ENCODE measurements at regions of chr15 and their contacts with region 1.

Region 1: GRCh38 chr15:88620995-88621772 is at the start of gene AEN:
- DNase-seq: peak; percentile 95
- H3K4me3 Mint-ChIP-seq: peak within 1 kb of the TSS; percentile 95
- H3K27ac Mint-ChIP-seq: peak within 1 kb of the TSS; percentile 97
- H3K4me1 Mint-ChIP-seq: peaks cover 38% of the 10 kb centered on the region
- H3K27me3 Mint-ChIP-seq: peaks cover 3% of the 10 kb centered on the region
- total RNA-seq, gene AEN: 52.9 and 54.3 TPM in 2 replicates

Region 2: GRCh38 chr15:88638626-88639372 is 17.6 kb after region 1 on chr15 and contains the start of gene ISG20:
- intact Hi-C with region 1: loop called (anchors 1 kb)
- DNase-seq: peak; percentile 96
- H3K4me3 Mint-ChIP-seq: peak within 1 kb of the TSS; percentile 85
- H3K27ac Mint-ChIP-seq: peak within 1 kb of the TSS; percentile 94
- H3K4me1 Mint-ChIP-seq: peaks cover 60% of the 10 kb centered on the region
- H3K27me3 Mint-ChIP-seq: no peaks in the 10 kb centered on the region
- total RNA-seq, gene ISG20: 36.3 and 38.0 TPM in 2 replicates

Region 3: GRCh38 chr15:88664151-88664778 is 43.1 kb after region 1 on chr15:
- intact Hi-C with region 1: loop called (anchors 1 kb)
- DNase-seq: no peak
- H3K4me3 Mint-ChIP-seq: no peak overlapping the region
- H3K27ac Mint-ChIP-seq: no peak overlapping the region
- H3K4me1 Mint-ChIP-seq: peaks cover 6% of the 10 kb centered on the region
- H3K27me3 Mint-ChIP-seq: peaks cover 16% of the 10 kb centered on the region

Region 4: GRCh38 chr15:89017370-89018066 is 396.3 kb after region 1 on chr15:
- intact Hi-C with region 1: loop called (anchors 10 kb)
- DNase-seq: peak; percentile 78
- H3K4me3 Mint-ChIP-seq: peak overlapping the region; percentile 43
- H3K27ac Mint-ChIP-seq: no peak overlapping the region
- H3K4me1 Mint-ChIP-seq: peaks cover 18% of the 10 kb centered on the region
- H3K27me3 Mint-ChIP-seq: peaks cover 35% of the 10 kb centered on the region